ENCODE measurements at regions of chr5 and their contacts with region 1.

Region 1: DNA sequence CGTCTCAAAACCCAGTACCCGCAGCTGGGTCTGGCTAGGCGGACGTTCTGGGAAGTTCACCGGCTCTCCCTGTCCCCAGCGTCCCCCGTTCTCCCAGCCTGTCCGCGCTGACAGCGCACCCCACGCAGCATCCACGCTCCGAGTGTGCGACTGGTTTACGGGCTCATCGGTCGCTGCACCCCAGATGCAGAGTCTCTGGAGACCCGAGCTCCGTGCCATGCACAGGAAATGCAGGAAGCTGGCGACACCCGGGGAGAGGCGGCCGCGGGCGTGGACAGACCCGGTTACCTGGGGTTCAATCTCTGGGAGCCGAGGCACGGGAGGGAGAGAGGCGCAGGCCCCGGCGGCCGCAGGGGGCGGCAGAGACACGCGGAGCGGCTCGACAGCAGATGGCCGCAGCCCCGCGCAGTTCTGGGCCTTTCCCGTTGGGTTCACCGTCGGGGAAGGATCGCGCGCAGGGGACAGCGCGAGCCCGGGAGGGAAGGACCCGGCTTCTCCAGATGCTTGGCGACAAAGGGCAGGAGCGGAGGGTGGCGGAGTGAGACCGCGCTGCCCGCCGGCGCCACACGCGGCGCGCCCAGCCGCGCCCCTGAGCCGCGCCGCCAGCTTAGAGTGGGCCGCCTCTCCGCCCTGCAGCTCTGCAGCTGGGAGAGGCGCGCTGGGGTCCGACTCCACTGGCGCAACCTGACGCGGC is 558 bp downstream of the SHROOM1 start:
- DNase-seq: peak; percentile 75 to 89 (median 82)
- ATAC-seq: peak; percentile 75 to 92 (median 88)
- H3K4me3 ChIP-seq: peak overlapping the region; percentile 54 to 90 (median 78)
- H3K27ac ChIP-seq: peak overlapping the region; percentile 63 to 91 (median 84)
- H3K4me1 ChIP-seq: peaks cover 0 to 33% (median 13%) of the 10 kb centered on the region in 12 donors
- H3K27me3 ChIP-seq: peaks cover 0 to 25% (median 0%) of the 10 kb centered on the region in 9 donors
- CTCF ChIP-seq: peak; percentile 76 to 96 (median 90)
- POLR2A ChIP-seq: peak in 1 of 2 donors; percentile 15

Region 2: GRCh38 chr5:132859889-132860437 is 30.1 kb after region 1 on chr5:
- intact Hi-C with region 1: loop called in 8 of 10 experiments (anchors 2 to 5 kb)
- DNase-seq: no peak
- ATAC-seq: no peak
- H3K4me3 ChIP-seq: no peak overlapping the region
- H3K27ac ChIP-seq: no peak overlapping the region
- H3K4me1 ChIP-seq: no peaks in the 10 kb centered on the region
- H3K27me3 ChIP-seq: no peaks in the 10 kb centered on the region
- CTCF ChIP-seq: no peak
- POLR2A ChIP-seq: no peak

Region 3: GRCh38 chr5:132883261-132883834 is 53.5 kb after region 1 on chr5:
- intact Hi-C with region 1: loop called (anchors 1 to 5 kb)
- DNase-seq: peak in 4 of 5 donors; percentile 42 to 61 (median 46)
- ATAC-seq: peak; percentile 77 to 88 (median 84)
- H3K4me3 ChIP-seq: no peak overlapping the region
- H3K27ac ChIP-seq: no peak overlapping the region
- H3K4me1 ChIP-seq: peaks cover 0 to 4% (median 0%) of the 10 kb centered on the region in 12 donors
- H3K27me3 ChIP-seq: no peaks in the 10 kb centered on the region
- CTCF ChIP-seq: peak; percentile 50 to 80 (median 67)
- POLR2A ChIP-seq: no peak

Region 4: DNA sequence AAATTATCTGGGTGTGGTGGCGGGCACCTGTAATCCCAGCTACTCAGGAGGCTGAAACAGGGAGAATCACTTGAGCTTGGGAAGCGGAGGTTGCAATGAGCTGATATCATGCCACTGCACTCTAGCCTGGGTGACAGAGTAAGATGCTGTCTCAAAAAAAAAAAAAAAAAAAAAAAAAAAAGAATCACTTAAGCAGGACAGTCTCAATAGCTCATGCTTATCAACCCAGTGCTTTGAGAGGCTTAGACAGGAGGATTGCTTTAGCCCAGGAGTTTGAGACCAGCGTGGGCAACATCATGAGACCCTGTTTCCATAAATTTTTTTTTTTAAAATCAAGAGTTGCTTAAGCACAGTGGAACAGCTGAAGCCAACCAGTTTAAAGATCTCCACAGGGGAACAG is 86.2 kb after region 1 on chr5:
- intact Hi-C with region 1: no loop called
- DNase-seq: no peak
- ATAC-seq: no peak
- H3K4me3 ChIP-seq: no peak overlapping the region
- H3K27ac ChIP-seq: no peak overlapping the region
- H3K4me1 ChIP-seq: peaks cover 0 to 9% (median 0%) of the 10 kb centered on the region in 12 donors
- H3K27me3 ChIP-seq: no peaks in the 10 kb centered on the region
- CTCF ChIP-seq: no peak
- POLR2A ChIP-seq: no peak

Region 5: DNA sequence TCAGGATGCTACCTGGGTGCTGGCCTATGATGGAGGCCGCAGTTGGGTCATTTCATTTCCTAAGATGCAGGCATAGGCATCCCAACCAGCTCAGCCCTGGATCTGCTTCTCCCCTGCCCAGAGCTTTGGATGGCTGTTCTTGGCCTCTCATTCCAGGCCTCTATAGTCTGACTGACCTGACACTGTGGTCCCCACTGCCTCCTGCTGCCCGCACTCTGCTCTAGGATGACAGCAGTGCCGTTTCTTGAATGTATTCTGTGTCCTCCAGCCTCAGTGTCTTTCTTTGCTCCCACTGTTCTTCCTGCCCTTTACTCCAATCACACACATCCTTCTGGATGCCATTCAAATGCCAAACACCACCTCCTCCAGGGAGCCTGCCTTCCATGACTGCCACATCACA is 457.6 kb after region 1 on chr5:
- intact Hi-C with region 1: no loop called
- DNase-seq: peak in 1 of 5 donors; percentile 64
- ATAC-seq: peak in 1 of 4 donors; percentile 40
- H3K4me3 ChIP-seq: no peak overlapping the region
- H3K27ac ChIP-seq: no peak overlapping the region
- H3K4me1 ChIP-seq: peaks cover 0 to 7% (median 0%) of the 10 kb centered on the region in 12 donors
- H3K27me3 ChIP-seq: no peaks in the 10 kb centered on the region
- CTCF ChIP-seq: peak in 9 of 12 donors; percentile 18 to 51 (median 28)
- POLR2A ChIP-seq: no peak

Measured in heart left ventricle (tissue), 16 donors.